CD8-positive, alpha-beta memory T cell (primary cell): ENCODE measurements at regions of chr1 and their contacts with region 1.

Region 1: DNA sequence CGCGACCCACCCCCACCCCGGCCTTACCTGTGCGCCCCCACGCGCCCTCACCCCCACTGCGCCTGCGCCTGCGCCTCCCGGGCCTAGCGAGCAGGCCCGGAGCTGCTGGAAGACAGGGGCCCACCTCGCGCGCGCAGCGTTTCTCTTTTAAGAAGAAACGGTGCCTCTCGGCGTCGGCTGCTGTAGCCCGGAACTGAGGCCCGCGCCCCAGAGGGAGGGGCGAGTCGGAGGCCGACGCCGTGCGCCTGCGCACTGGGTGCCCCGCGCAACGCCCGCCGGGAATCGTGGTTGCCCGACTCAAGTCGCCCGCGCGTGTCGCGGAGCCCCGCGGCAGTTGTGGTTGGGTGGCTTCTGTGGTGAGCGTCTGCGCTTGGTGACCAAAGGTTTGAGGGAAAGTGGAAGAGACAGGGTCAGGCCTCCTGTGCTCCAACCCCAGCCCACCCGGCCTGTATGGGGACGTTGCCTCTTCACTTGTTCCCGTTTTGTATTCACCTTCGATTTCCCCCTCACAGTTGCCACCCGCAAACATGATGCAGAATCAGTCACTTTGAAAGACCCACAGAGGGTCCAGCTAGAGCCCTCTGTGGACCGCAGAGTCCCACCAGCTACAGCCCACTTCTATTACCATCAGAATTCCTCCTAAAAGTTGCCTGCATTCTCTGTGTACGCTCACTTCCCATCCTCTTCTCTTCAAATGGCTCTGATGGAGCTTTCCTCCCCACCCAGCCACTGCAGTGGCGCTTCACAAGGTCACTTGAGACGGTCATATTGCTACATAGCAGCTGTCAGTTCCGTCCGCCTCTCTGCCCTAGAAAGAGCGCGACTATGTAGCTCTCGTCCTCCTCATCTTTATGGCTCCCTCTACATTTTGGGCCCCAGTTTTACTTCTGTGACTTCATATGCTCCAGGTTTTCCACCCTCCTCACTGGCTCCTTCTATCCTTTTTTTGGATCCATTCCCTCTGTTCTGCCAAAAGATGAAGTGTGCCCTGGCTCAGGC is at the start of gene ZNF692:
- DNase-seq: peak; percentile 94 to 99 (median 97)
- H3K4me3 ChIP-seq: peak within 1 kb of the TSS; percentile 71
- H3K4me3 Mint-ChIP-seq: peak within 1 kb of the TSS; percentile 82 to 94 (median 89)
- H3K27ac ChIP-seq: peak within 1 kb of the TSS; percentile 77
- H3K27ac Mint-ChIP-seq: peak within 1 kb of the TSS; percentile 90 to 97 (median 95)
- H3K4me1 ChIP-seq: peaks cover 58% of the 10 kb centered on the region
- H3K4me1 Mint-ChIP-seq: peaks cover 47 to 59% (median 58%) of the 10 kb centered on the region in 3 donors
- H3K27me3 ChIP-seq: no peaks in the 10 kb centered on the region
- H3K27me3 Mint-ChIP-seq: no peaks in the 10 kb centered on the region
- total RNA-seq, gene ZNF692: 56.0 to 58.7 TPM

Region 2: GRCh38 chr1:248811514-248812490 is 47.4 kb before region 1 on chr1:
- CTCF ChIA-PET with region 1: no interaction called
- POLR2A ChIA-PET with region 1: no interaction called
- DNase-seq: no peak
- H3K4me3 ChIP-seq: no peak overlapping the region
- H3K4me3 Mint-ChIP-seq: no peak overlapping the region
- H3K27ac ChIP-seq: no peak overlapping the region
- H3K27ac Mint-ChIP-seq: peak overlapping the region in 2 of 8 donors; percentile 41 to 58
- H3K4me1 ChIP-seq: peaks cover 14% of the 10 kb centered on the region
- H3K4me1 Mint-ChIP-seq: peaks cover 5 to 12% (median 9%) of the 10 kb centered on the region in 3 donors
- H3K27me3 ChIP-seq: no peaks in the 10 kb centered on the region
- H3K27me3 Mint-ChIP-seq: no peaks in the 10 kb centered on the region

Region 3: DNA sequence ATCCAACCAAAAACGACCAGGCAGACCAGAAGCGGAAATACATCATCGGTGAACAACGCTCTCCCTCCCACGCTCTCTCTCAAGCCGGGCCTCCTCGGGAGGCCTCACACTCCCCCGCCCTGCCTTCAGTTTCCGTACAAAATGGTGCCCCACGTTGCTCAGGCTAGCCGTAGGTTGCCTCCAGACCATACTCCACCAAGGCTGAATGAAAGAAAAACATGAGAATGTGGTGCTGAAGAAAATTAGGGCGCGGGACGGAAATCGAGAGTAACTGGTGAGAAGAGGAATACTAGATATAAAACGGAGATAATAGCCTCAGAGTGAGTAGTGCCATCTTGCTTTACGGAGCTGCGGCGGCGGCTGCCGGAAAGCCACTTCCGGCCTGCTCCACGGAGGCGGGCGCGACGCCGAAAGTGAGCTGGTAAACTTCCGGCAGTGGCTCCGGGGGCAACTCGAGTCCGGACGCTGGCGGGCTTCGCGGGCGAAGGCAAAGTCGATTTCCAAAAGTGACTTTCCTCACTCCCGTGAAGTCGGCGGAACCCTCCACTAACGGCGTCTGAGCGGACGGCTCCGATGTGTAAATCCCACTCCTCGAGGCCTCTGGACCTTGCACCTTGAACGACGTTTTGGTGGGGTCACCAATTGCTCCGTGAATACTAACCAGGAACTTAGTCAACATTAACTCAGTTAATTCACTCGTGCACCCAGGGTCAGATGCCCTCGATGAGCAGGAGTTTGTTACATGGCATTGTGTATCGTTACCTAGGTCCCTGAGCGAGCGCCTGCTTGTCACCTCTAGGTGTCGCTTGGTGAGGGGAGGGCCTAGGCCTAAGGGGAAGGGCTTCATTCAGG is 33.1 kb before region 1 on chr1 and contains the start of gene SH3BP5L:
- CTCF ChIA-PET with region 1: interaction called, 23 read pairs
- POLR2A ChIA-PET with region 1: interaction called, 13 read pairs
- DNase-seq: peak; percentile 84 to 94 (median 92)
- H3K4me3 ChIP-seq: peak within 1 kb of the TSS; percentile 98
- H3K4me3 Mint-ChIP-seq: peak within 1 kb of the TSS; percentile 89 to 99 (median 97)
- H3K27ac ChIP-seq: peak within 1 kb of the TSS; percentile 97
- H3K27ac Mint-ChIP-seq: peak within 1 kb of the TSS; percentile 92 to 100 (median 99)
- H3K4me1 ChIP-seq: peaks cover 51% of the 10 kb centered on the region
- H3K4me1 Mint-ChIP-seq: peaks cover 49 to 61% (median 60%) of the 10 kb centered on the region in 3 donors
- H3K27me3 ChIP-seq: no peaks in the 10 kb centered on the region
- H3K27me3 Mint-ChIP-seq: peaks cover 0 to 3% of the 10 kb centered on the region in 2 donors
- total RNA-seq, gene SH3BP5L: 20.1 to 21.8 TPM

Region 4: GRCh38 chr1:248873409-248873992 is 14.3 kb after region 1 on chr1:
- CTCF ChIA-PET with region 1: interaction called, 14 read pairs
- POLR2A ChIA-PET with region 1: interaction called, 17 read pairs
- DNase-seq: peak; percentile 81 to 96 (median 91)
- H3K4me3 ChIP-seq: peak overlapping the region; percentile 88
- H3K4me3 Mint-ChIP-seq: peak overlapping the region; percentile 93 to 99 (median 97)
- H3K27ac ChIP-seq: peak overlapping the region; percentile 87
- H3K27ac Mint-ChIP-seq: peak overlapping the region; percentile 92 to 100 (median 99)
- H3K4me1 ChIP-seq: no peaks in the 10 kb centered on the region
- H3K4me1 Mint-ChIP-seq: peaks cover 28 to 49% (median 41%) of the 10 kb centered on the region in 3 donors
- H3K27me3 ChIP-seq: no peaks in the 10 kb centered on the region
- H3K27me3 Mint-ChIP-seq: peaks cover 0 to 14% of the 10 kb centered on the region in 2 donors